ENCODE measurements at regions of chr3 and their contacts with region 1.

Region 1: DNA sequence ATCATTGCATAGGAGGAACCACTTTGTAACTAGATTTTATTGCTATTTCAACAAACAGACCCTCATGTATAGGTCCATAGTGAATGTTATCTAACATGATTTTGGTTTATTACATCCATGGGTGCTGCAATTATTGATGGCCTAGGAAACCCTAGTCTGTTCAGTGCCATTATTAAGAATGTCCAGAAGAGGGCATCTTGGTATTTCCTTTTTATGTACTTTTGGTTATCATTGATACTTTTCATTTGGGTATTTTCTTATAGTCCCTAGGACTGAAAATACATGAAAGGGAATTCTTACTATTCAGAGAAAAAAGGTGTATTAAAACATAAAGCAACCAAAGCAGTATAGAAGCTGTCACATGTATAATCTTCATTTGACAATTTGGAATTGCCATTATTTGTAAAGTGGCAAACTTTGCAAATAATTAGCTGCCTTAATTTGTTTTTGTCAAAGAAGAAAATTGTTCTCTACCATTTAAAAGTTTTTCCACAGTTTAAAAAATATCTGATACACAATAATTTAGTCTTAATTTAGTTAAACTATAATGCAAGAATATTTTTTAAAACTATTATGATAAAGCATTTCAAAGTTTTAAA is 48.7 kb downstream of the CNOT10 start:
- DNase-seq: no peak
- ATAC-seq: no peak

Region 2: GRCh38 chr3:32934150-32934742 is 200.5 kb after region 1 on chr3:
- intact Hi-C with region 1: loop called (anchors 10 kb)
- DNase-seq: no peak
- ATAC-seq: no peak

Measured in Right ventricle myocardium superior (tissue), 1 donor.